Endothelial cell of umbilical vein (primary cell): ENCODE measurements at regions of chr16 and their contacts with region 1.

Region 1: GRCh38 chr16:22077700-22078313 is 14.5 kb upstream of the VWA3A start:
- DNase-seq: peak; percentile 72
- H3K4me3 ChIP-seq: no peak overlapping the region
- H3K27ac ChIP-seq: no peak overlapping the region
- H3K4me1 ChIP-seq: peaks cover 28% of the 10 kb centered on the region
- H3K27me3 ChIP-seq: no peaks in the 10 kb centered on the region
- CTCF ChIP-seq: peak; percentile 76 to 77
- POLR2A ChIP-seq: no peak

Region 2: GRCh38 chr16:21952793-21953540 is 124.8 kb before region 1 on chr16 and contains the start of gene UQCRC2:
- CTCF ChIA-PET with region 1: interaction called, 24 read pairs
- POLR2A ChIA-PET with region 1: no interaction called
- dilution Hi-C with region 1: no loop called
- intact Hi-C with region 1: loop called (anchors 1 kb)
- DNase-seq: peak; percentile 94
- H3K4me3 ChIP-seq: peak within 1 kb of the TSS; percentile 53 to 92 (median 83)
- H3K27ac ChIP-seq: peak within 1 kb of the TSS; percentile 97
- H3K4me1 ChIP-seq: peaks cover 16% of the 10 kb centered on the region
- H3K27me3 ChIP-seq: no peaks in the 10 kb centered on the region
- CTCF ChIP-seq: no peak
- POLR2A ChIP-seq: peak; percentile 87
- total RNA-seq, gene UQCRC2: 189 and 207 TPM in 2 replicates

Region 3: DNA sequence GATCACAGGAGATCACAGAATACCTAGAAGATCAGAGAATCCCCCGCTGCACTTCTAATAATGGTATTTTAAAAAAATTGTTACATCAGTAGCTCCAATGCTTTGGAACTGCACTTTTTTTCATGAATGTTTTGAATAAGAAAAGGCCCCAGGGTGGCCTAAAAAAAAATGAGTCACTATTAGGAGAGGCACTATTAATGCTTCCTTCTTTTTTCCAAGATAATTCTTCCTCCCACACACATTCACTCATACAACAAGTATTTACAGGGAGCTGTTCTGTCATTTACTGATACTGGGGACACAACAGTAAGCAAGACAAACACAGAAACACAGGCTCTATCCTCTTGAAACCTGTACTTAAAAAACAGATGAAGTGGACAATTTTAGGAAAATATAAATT is 76.2 kb before region 1 on chr16:
- CTCF ChIA-PET with region 1: interaction called, 994 read pairs
- POLR2A ChIA-PET with region 1: interaction called, 3 read pairs
- dilution Hi-C with region 1: no loop called
- intact Hi-C with region 1: loop called (anchors 1 kb)
- DNase-seq: no peak
- H3K4me3 ChIP-seq: no peak overlapping the region
- H3K27ac ChIP-seq: no peak overlapping the region
- H3K4me1 ChIP-seq: peaks cover 19% of the 10 kb centered on the region
- H3K27me3 ChIP-seq: no peaks in the 10 kb centered on the region
- CTCF ChIP-seq: no peak
- POLR2A ChIP-seq: no peak

Region 4: GRCh38 chr16:22030087-22030812 is 47.6 kb before region 1 on chr16:
- CTCF ChIA-PET with region 1: interaction called, 59 read pairs
- POLR2A ChIA-PET with region 1: no interaction called
- dilution Hi-C with region 1: no loop called
- intact Hi-C with region 1: loop called (anchors 1 kb)
- DNase-seq: no peak
- H3K4me3 ChIP-seq: no peak overlapping the region
- H3K27ac ChIP-seq: peak overlapping the region; percentile 29
- H3K4me1 ChIP-seq: peaks cover 44% of the 10 kb centered on the region
- H3K27me3 ChIP-seq: no peaks in the 10 kb centered on the region
- CTCF ChIP-seq: no peak
- POLR2A ChIP-seq: no peak

Region 5: GRCh38 chr16:22091758-22092600 is 14.2 kb after region 1 on chr16 and contains the start of gene VWA3A:
- CTCF ChIA-PET with region 1: interaction called, 30 read pairs
- POLR2A ChIA-PET with region 1: no interaction called
- dilution Hi-C with region 1: no loop called
- intact Hi-C with region 1: no loop called
- DNase-seq: peak; percentile 47
- H3K4me3 ChIP-seq: no peak within 1 kb of the TSS
- H3K27ac ChIP-seq: no peak within 1 kb of the TSS
- H3K4me1 ChIP-seq: no peaks in the 10 kb centered on the region
- H3K27me3 ChIP-seq: no peaks in the 10 kb centered on the region
- CTCF ChIP-seq: no peak
- POLR2A ChIP-seq: no peak
- total RNA-seq, gene VWA3A: 0.46 and 0.84 TPM in 2 replicates

Region 6: GRCh38 chr16:22174642-22175041 is 96.8 kb after region 1 on chr16:
- CTCF ChIA-PET with region 1: interaction called, 14 read pairs
- POLR2A ChIA-PET with region 1: no interaction called
- dilution Hi-C with region 1: no loop called
- intact Hi-C with region 1: no loop called
- DNase-seq: no peak
- H3K4me3 ChIP-seq: no peak overlapping the region
- H3K27ac ChIP-seq: no peak overlapping the region
- H3K4me1 ChIP-seq: no peaks in the 10 kb centered on the region
- H3K27me3 ChIP-seq: no peaks in the 10 kb centered on the region
- CTCF ChIP-seq: no peak
- POLR2A ChIP-seq: no peak

Region 7: GRCh38 chr16:23996258-23996955 is 1918.6 kb after region 1 on chr16:
- CTCF ChIA-PET with region 1: no interaction called
- POLR2A ChIA-PET with region 1: no interaction called
- dilution Hi-C with region 1: no loop called
- intact Hi-C with region 1: no loop called
- DNase-seq: no peak
- H3K4me3 ChIP-seq: no peak overlapping the region
- H3K27ac ChIP-seq: no peak overlapping the region
- H3K4me1 ChIP-seq: no peaks in the 10 kb centered on the region
- H3K27me3 ChIP-seq: no peaks in the 10 kb centered on the region
- CTCF ChIP-seq: no peak
- POLR2A ChIP-seq: no peak